Mucosa of descending colon (tissue), 3 donors: ENCODE measurements at regions of chr12 and their contacts with region 1.

Region 1: GRCh38 chr12:20232931-20233675 is 135.2 kb upstream of the PDE3A start:
- DNase-seq: no peak
- ATAC-seq: no peak
- H3K4me3 ChIP-seq: no peak overlapping the region
- H3K4me1 ChIP-seq: no peaks in the 10 kb centered on the region
- CTCF ChIP-seq: no peak

Region 2: DNA sequence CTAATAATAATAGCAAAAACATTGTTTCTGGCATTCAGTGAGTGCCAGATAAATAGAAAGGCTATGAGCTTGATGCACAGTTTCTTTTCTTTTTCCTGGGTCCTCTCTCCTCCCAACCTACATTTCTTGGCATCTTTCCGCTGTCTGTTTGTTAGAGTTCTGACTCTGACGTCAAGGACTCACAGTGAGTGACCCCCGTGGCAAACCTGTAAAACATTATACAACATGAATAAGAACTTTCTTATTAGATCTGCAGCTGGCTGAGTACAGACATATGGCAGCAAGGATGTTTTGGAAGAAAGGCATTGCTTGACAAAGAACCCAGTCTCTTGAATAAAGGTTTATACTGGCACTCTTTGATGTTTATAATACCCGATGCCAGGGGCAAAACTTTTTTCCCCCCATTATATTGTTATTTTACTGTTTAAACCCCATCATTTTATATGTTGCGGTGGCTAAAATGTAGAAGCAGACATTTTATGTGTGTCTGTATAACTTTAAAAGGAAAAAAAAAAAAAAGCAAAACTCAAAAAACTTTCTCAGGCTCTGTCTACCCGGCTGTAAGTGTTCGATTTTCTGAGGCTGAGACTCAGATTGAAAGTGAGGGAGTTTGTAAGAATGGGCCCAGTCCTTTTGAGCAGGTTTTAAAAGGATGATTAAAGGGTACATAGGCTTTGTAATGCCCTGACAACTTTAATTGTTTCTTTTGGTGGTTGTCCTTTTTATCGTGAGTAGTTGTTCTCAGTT is 294.5 kb after region 1 on chr12:
- intact Hi-C with region 1: loop called in 1 of 2 experiments (anchors 10 kb)
- DNase-seq: no peak
- ATAC-seq: no peak
- H3K4me3 ChIP-seq: no peak overlapping the region
- H3K4me1 ChIP-seq: no peaks in the 10 kb centered on the region
- CTCF ChIP-seq: no peak